Natural killer cell (primary cell): ENCODE measurements at regions of chr1 and their contacts with region 1.

Region 1: GRCh38 chr1:116817582-116818064 is 63.4 kb downstream of the CD2 start:
- DNase-seq: peak; percentile 54 to 88
- ATAC-seq: peak; percentile 67 to 76 (median 71)
- H3K4me3 ChIP-seq: no peak overlapping the region
- H3K4me3 Mint-ChIP-seq: peak overlapping the region; percentile 67
- H3K27ac ChIP-seq: no peak overlapping the region
- H3K27ac Mint-ChIP-seq: peak overlapping the region; percentile 48 to 90
- H3K4me1 ChIP-seq: peaks cover 29% of the 10 kb centered on the region
- H3K4me1 Mint-ChIP-seq: peaks cover 36 to 42% of the 10 kb centered on the region in 2 donors
- H3K27me3 ChIP-seq: no peaks in the 10 kb centered on the region
- H3K27me3 Mint-ChIP-seq: no peaks in the 10 kb centered on the region
- CTCF ChIP-seq: peak; percentile 78

Region 2: DNA sequence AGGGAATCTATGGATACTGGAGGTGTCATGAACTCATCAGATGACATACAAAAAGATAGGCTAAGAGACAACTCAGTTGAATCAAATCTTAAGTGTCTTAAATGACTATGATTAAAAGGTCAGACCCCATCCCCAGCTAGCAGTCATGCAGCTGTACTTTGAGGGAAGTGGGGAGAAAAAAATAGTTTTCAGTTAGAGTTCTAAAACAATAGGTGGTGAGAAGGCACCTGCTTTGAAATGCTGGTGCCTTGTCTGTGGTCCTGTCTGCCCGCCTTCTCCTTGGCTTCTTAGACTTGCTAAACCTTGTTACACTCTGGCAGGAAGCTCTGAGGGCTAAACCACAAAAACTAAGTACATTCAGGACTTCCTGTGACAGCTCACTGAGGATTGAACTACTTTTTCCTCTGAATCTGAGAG is 48.1 kb before region 1 on chr1:
- intact Hi-C with region 1: loop called (anchors 5 kb)
- DNase-seq: peak in 1 of 2 donors; percentile 92
- ATAC-seq: peak; percentile 73 to 91 (median 80)
- H3K4me3 ChIP-seq: no peak overlapping the region
- H3K4me3 Mint-ChIP-seq: peak overlapping the region; percentile 81
- H3K27ac ChIP-seq: peak overlapping the region; percentile 78
- H3K27ac Mint-ChIP-seq: peak overlapping the region; percentile 93 to 94
- H3K4me1 ChIP-seq: peaks cover 69% of the 10 kb centered on the region
- H3K4me1 Mint-ChIP-seq: peaks cover 59 to 83% of the 10 kb centered on the region in 2 donors
- H3K27me3 ChIP-seq: no peaks in the 10 kb centered on the region
- H3K27me3 Mint-ChIP-seq: no peaks in the 10 kb centered on the region
- CTCF ChIP-seq: no peak

Region 3: GRCh38 chr1:116847688-116848531 is 30.3 kb after region 1 on chr1:
- intact Hi-C with region 1: no loop called
- DNase-seq: no peak
- ATAC-seq: peak in 1 of 3 donors; percentile 70
- H3K4me3 ChIP-seq: no peak overlapping the region
- H3K4me3 Mint-ChIP-seq: no peak overlapping the region
- H3K27ac ChIP-seq: no peak overlapping the region
- H3K27ac Mint-ChIP-seq: no peak overlapping the region
- H3K4me1 ChIP-seq: no peaks in the 10 kb centered on the region
- H3K4me1 Mint-ChIP-seq: no peaks in the 10 kb centered on the region
- H3K27me3 ChIP-seq: no peaks in the 10 kb centered on the region
- H3K27me3 Mint-ChIP-seq: no peaks in the 10 kb centered on the region
- CTCF ChIP-seq: no peak

Region 4: DNA sequence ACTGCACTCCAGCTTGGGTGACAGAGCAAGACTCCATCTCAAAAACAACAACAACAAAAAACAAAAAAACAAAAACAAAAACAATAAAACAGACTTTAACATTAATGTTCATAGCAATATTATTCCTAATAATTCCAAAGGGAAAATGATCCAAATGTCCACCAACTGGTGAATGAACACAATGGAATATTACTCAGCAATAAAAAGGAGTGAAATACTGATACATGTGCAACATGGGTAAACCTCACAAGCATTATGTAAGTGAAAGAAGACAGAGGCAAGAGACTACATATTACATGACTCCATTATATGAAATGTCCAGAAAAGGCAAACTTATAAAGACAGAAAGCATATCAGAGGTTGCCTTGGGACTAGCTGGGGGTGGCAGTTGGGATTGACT is 236.4 kb after region 1 on chr1:
- intact Hi-C with region 1: loop called (anchors 2 kb)
- DNase-seq: no peak
- ATAC-seq: no peak
- H3K4me3 ChIP-seq: no peak overlapping the region
- H3K4me3 Mint-ChIP-seq: no peak overlapping the region
- H3K27ac ChIP-seq: no peak overlapping the region
- H3K27ac Mint-ChIP-seq: no peak overlapping the region
- H3K4me1 ChIP-seq: peaks cover 14% of the 10 kb centered on the region
- H3K4me1 Mint-ChIP-seq: peaks cover 24 to 29% of the 10 kb centered on the region in 2 donors
- H3K27me3 ChIP-seq: no peaks in the 10 kb centered on the region
- H3K27me3 Mint-ChIP-seq: no peaks in the 10 kb centered on the region
- CTCF ChIP-seq: no peak